Activated B cell treated with CpG ODN at 0.5 μM for 24 hours (primary cell): ENCODE measurements at regions of chr19 and their contacts with region 1.

Region 1: DNA sequence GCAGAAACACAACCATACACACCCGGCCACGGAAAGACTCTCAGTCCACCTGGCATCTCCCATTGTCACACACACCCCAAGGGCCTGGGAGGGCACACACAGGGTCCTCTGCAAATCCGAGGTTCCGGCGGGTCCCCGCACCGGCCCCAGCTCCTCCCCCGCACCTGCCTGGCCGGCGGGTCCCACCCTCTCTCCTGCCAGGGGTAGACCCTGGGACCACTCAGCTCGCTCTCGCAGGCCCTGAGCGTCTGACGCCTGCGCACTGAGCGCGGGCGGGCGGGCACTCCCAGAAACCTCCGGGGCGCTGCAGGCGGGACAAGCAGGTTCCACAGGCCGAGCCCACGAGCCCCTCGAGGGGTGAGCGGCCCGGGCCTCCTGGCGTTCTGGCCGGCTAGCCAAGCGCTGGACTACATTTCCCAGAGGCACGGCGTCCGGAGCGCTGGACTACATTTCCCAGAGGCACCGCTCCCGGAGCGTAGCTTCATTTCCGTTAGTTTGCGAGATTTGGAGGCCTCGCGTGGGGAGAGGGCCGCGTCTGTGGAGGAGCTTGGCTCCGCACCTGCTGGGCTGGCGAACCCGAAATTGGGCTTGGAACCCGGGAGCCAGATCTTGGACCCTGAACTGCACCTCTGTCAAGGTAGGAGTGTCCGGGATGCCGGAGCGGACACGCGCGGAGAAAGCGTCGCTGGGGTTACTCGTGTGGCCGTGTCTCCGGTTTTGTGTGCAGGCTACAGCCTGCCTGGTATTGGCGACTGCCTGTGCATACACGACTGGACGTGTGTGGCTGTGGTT is at the start of gene ZNF420:
- DNase-seq: peak; percentile 83
- ATAC-seq: peak; percentile 96
- H3K4me3 Mint-ChIP-seq: peak within 1 kb of the TSS; percentile 97
- H3K27ac Mint-ChIP-seq: peak within 1 kb of the TSS; percentile 92
- H3K4me1 Mint-ChIP-seq: peaks cover 32% of the 10 kb centered on the region
- H3K27me3 Mint-ChIP-seq: no peaks in the 10 kb centered on the region
- CTCF ChIP-seq: no peak
- total RNA-seq, gene ZNF420: 11.6 and 11.9 TPM in 2 replicates

Region 2: DNA sequence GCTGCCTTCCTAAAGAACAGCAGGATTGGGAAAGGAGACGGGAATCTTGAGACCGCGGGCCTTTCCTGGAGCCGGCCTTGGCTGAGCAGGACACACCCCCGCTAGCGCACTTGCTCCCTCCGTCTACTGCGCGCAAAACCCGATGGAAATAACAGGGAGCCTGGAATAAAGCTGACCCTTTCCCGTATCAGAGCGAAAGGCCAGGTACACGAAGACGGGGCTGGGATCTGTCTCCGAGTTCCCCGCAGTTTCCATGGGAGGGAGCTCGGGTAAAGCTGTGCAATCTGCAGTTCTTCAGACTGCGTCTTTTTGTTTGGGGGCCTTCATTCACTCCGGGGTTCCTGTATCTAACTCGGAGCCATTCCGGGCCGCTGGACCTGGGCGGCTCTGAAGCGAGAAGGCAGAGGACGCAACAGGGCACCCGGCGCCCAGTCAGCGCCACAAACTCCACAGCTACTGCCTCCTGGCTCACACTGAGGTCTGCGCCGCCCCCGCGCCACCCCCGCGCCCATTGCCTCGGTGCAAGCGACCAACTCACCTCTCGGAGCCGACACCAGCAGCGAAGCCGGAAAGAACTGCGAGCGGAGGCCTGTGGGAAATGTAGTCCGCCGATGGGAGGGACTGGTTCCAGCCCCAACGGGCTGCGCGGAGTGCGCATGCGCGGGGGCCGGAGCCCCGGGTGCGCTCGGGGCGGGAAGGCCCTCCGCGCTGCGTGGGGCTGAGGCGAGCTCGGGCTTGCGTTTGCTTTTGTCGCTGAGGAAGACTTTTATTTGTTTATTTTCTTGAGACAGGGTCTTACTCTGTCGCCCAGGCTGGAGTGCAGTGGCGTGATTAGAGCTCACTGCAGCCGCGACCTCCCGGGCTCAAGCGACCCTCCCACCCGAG is 699.3 kb before region 1 on chr19 and contains the start of gene ZFP14:
- CTCF ChIA-PET with region 1: no interaction called
- POLR2A ChIA-PET with region 1: no interaction called
- intact Hi-C with region 1: loop called (anchors 2 kb)
- DNase-seq: peak; percentile 92
- ATAC-seq: peak; percentile 99
- H3K4me3 Mint-ChIP-seq: peak within 1 kb of the TSS; percentile 94
- H3K27ac Mint-ChIP-seq: peak within 1 kb of the TSS; percentile 96
- H3K4me1 Mint-ChIP-seq: peaks cover 21% of the 10 kb centered on the region
- H3K27me3 Mint-ChIP-seq: no peaks in the 10 kb centered on the region
- CTCF ChIP-seq: no peak
- total RNA-seq, gene ZFP14: 7.7 and 10.4 TPM in 2 replicates

Region 3: GRCh38 chr19:36573020-36573885 is 504.9 kb before region 1 on chr19 and contains the start of gene ZNF529:
- CTCF ChIA-PET with region 1: no interaction called
- POLR2A ChIA-PET with region 1: interaction called, 6 read pairs
- intact Hi-C with region 1: loop called (anchors 1 kb)
- DNase-seq: peak; percentile 79
- ATAC-seq: peak; percentile 91
- H3K4me3 Mint-ChIP-seq: peak within 1 kb of the TSS; percentile 89
- H3K27ac Mint-ChIP-seq: peak within 1 kb of the TSS; percentile 86
- H3K4me1 Mint-ChIP-seq: peaks cover 33% of the 10 kb centered on the region
- H3K27me3 Mint-ChIP-seq: no peaks in the 10 kb centered on the region
- CTCF ChIP-seq: no peak
- total RNA-seq, gene ZNF529: 21.9 and 23.6 TPM in 2 replicates

Region 4: DNA sequence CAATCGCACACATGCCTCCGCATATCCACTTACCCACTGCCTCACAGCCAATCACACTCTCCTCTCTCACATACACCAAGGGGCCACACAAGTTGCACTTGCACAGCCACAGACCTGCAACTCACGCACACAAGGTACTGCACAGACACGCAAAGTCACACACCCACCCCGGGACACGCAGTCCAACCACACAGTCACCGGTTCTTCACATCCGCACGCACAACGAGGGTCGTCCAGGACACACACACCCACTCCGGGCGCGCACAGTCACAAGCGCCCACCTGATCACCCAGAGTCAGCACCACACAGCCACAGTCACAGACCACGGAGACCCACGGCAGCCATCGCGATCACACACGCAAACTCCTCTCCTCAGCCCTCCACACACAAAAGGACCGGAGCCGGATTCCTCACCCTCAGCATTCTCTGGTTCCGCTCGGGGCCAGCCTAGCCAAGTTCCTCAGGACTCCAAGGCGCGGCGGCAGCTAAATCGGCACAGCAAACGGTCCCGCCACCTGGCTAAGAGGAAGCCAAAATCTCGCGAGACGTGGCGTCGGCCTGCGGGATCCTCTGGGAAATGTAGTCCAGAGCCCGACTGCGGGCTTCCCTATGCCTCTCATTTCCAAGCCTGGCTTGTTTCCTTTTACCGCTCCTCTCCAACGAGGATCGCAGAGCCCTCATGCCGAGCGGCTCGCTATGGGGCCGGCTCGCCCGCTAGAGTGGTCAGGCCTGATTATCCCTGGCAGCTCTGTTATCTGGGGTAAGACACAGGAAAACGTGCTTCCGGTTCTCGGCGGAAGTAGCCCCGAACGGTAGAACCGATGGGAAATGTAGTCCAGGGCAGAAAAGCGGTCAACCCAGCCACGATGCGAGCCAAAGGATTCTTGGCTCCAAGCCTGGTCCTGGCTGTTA is 305.6 kb before region 1 on chr19 and contains the start of gene ZNF850:
- CTCF ChIA-PET with region 1: no interaction called
- POLR2A ChIA-PET with region 1: interaction called, 3 read pairs
- intact Hi-C with region 1: loop called (anchors 1 kb)
- DNase-seq: peak; percentile 89
- ATAC-seq: peak; percentile 92
- H3K4me3 Mint-ChIP-seq: peak within 1 kb of the TSS; percentile 92
- H3K27ac Mint-ChIP-seq: peak within 1 kb of the TSS; percentile 85
- H3K4me1 Mint-ChIP-seq: peaks cover 24% of the 10 kb centered on the region
- H3K27me3 Mint-ChIP-seq: no peaks in the 10 kb centered on the region
- CTCF ChIP-seq: no peak
- total RNA-seq, gene ZNF850: 5.8 and 7.9 TPM in 2 replicates

Region 5: GRCh38 chr19:36915992-36916830 is 161.9 kb before region 1 on chr19 and contains the starts of genes ZNF568 and ZNF829:
- CTCF ChIA-PET with region 1: no interaction called
- POLR2A ChIA-PET with region 1: no interaction called
- intact Hi-C with region 1: loop called (anchors 1 kb)
- DNase-seq: peak; percentile 87
- ATAC-seq: peak; percentile 93
- H3K4me3 Mint-ChIP-seq: peak within 1 kb of the TSS; percentile 91
- H3K27ac Mint-ChIP-seq: peak within 1 kb of the TSS; percentile 91
- H3K4me1 Mint-ChIP-seq: peaks cover 26% of the 10 kb centered on the region
- H3K27me3 Mint-ChIP-seq: no peaks in the 10 kb centered on the region
- CTCF ChIP-seq: no peak
- total RNA-seq, gene ZNF568: 12.0 and 13.4 TPM in 2 replicates
- total RNA-seq, gene ZNF829: 7.3 and 7.6 TPM in 2 replicates

Region 6: GRCh38 chr19:37059142-37059541 is 19.0 kb before region 1 on chr19:
- CTCF ChIA-PET with region 1: no interaction called
- POLR2A ChIA-PET with region 1: no interaction called
- intact Hi-C with region 1: no loop called
- DNase-seq: no peak
- ATAC-seq: no peak
- H3K4me3 Mint-ChIP-seq: no peak overlapping the region
- H3K27ac Mint-ChIP-seq: no peak overlapping the region
- H3K4me1 Mint-ChIP-seq: no peaks in the 10 kb centered on the region
- H3K27me3 Mint-ChIP-seq: peaks cover 4% of the 10 kb centered on the region
- CTCF ChIP-seq: no peak

Region 7: DNA sequence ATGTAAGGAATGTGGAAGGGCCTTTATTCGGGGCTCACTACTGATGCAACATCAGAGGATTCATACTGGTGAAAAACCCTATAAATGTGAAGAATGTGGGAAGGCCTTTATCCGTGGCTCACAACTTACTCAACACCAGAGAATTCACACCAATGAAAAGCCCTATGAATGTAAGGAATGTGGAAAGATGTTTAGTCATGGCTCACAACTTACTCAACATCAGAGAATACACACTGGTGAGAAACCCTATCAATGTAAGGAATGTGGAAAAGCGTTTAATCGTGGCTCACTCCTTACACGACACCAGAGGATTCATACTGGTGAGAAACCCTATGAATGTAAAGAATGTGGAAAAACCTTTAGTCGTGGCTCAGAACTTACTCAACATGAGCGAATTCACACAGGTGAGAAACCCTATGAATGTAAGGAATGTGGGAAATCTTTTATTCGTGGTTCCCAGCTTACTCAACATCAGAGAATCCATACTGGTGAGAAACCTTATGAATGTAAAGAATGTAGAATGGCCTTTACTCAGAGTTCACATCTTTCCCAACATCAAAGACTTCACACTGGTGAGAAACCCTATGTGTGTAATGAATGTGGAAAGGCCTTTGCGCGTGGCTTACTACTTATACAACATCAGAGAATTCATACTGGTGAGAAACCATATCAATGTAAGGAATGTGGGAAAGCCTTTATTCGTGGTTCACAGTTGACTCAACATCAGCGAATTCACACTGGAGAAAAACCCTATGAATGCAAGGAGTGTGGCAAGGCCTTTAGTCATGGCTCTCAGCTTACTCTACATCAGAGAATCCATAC is 50.1 kb after region 1 on chr19:
- CTCF ChIA-PET with region 1: no interaction called
- POLR2A ChIA-PET with region 1: no interaction called
- intact Hi-C with region 1: no loop called
- DNase-seq: no peak
- ATAC-seq: no peak
- H3K4me3 Mint-ChIP-seq: no peak overlapping the region
- H3K27ac Mint-ChIP-seq: no peak overlapping the region
- H3K4me1 Mint-ChIP-seq: no peaks in the 10 kb centered on the region
- H3K27me3 Mint-ChIP-seq: no peaks in the 10 kb centered on the region
- CTCF ChIP-seq: no peak

Region 8: DNA sequence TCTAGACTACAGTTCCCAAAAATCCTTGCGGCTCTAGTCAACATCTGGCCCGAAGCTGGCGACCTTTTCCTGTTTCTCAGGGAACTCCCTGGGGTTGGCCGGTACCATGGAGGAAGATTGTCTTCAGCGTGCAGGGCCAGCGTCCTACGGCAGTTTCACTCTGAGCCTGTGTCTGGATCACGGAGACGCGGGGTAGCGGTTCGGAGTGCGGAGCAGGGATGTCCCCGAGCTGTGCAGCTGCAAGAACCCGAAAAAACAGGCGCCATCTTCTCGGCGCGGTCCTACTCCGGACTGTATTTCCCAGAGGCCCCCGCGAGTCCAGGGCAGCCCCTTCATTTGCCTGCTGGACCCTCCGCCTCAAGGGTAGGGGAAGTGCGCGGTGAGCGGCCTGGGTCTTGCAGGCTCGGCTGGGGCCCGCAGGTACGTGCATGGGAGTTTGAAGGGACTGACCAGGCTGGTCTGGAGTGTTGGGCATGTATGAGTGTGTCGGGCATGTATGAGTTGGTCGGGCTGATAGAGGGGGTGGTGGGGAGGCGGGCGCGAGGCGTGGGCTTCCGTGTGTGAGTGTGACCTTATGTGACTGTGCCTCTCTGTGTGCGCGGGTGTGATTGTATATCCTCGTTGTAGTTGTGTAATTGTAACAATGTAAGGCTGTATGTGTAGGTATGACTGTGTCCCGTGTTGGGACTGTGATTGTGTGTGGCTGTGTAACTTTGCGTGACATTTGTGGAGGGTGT is 139.9 kb after region 1 on chr19 and contains the start of gene ZNF383:
- CTCF ChIA-PET with region 1: no interaction called
- POLR2A ChIA-PET with region 1: interaction called, 12 read pairs
- intact Hi-C with region 1: loop called (anchors 1 kb)
- DNase-seq: peak; percentile 81
- ATAC-seq: peak; percentile 89
- H3K4me3 Mint-ChIP-seq: peak within 1 kb of the TSS; percentile 98
- H3K27ac Mint-ChIP-seq: peak within 1 kb of the TSS; percentile 99
- H3K4me1 Mint-ChIP-seq: peaks cover 26% of the 10 kb centered on the region
- H3K27me3 Mint-ChIP-seq: no peaks in the 10 kb centered on the region
- CTCF ChIP-seq: no peak
- total RNA-seq, gene ZNF383: 19.9 and 25.5 TPM in 2 replicates

Region 9: DNA sequence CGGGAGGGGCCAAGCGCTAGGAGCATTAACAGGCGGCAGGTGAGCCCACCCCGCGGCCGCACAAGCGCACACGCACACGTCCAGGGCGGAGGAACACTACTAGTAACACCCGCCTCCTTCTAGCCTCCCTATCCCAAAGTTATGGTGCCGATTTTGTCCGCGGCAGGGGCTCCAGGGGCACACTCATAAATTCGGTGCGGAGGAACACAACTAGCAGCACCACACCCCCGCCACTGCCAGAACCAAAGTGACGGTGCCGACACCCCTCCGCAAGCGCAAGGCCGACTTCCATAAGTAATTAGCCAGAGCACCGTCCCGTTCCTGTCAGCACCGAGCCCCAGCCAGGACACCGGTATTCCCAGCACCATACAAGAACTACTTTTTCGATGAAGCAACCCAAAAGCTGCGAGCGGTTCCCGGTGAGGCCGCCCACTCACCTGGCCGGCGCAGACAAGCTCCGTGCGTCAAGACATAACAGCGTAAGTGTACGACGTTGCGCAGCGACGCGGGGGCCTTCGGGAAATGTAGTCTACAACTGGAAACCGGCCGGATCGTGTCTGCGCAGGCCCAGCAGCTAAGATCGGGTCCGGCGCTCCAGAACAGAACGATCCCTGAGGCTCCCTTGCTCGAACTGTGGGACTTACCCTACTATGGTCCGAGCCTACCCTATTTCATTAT is 516.3 kb after region 1 on chr19 and contains the starts of genes ZNF540 and ZNF571:
- CTCF ChIA-PET with region 1: no interaction called
- POLR2A ChIA-PET with region 1: interaction called, 7 read pairs
- intact Hi-C with region 1: loop called (anchors 1 kb)
- DNase-seq: peak; percentile 83
- ATAC-seq: peak; percentile 97
- H3K4me3 Mint-ChIP-seq: peak within 1 kb of the TSS; percentile 98
- H3K27ac Mint-ChIP-seq: peak within 1 kb of the TSS; percentile 97
- H3K4me1 Mint-ChIP-seq: peaks cover 23% of the 10 kb centered on the region
- H3K27me3 Mint-ChIP-seq: no peaks in the 10 kb centered on the region
- CTCF ChIP-seq: no peak
- total RNA-seq, gene ZNF540: 1.9 and 2.9 TPM in 2 replicates
- total RNA-seq, gene ZNF571: 5.0 and 5.2 TPM in 2 replicates